ENCODE measurements at regions of chr15 and their contacts with region 1.

Region 1: GRCh38 chr15:70826634-70827033 is 27.3 kb downstream of the LARP6 start:
- DNase-seq: peak; percentile 66
- H3K4me3 ChIP-seq: no peak overlapping the region
- CTCF ChIP-seq: no peak

Region 2: DNA sequence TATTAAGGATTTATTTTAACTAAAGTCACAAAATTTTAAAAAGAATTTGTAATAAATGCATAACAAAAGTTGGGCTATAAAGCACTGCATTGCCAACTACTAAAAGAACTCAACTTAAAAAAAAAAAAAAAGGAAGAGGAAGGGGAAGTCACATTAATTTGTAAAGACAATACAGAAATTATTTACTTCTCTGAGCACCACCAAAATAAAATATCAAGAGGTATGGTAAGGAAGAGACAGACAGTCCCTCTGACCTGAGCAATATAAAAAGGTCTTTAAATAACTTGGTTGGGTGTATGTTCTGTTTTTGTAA is 146.8 kb before region 1 on chr15:
- CTCF ChIA-PET with region 1: interaction called, 23 read pairs
- POLR2A ChIA-PET with region 1: no interaction called
- DNase-seq: no peak
- H3K4me3 ChIP-seq: no peak overlapping the region
- CTCF ChIP-seq: no peak

Region 3: GRCh38 chr15:70799667-70800450 is 26.8 kb before region 1 on chr15:
- CTCF ChIA-PET with region 1: interaction called, 15 read pairs
- POLR2A ChIA-PET with region 1: no interaction called
- DNase-seq: peak; percentile 93
- H3K4me3 ChIP-seq: no peak overlapping the region
- CTCF ChIP-seq: no peak

Region 4: DNA sequence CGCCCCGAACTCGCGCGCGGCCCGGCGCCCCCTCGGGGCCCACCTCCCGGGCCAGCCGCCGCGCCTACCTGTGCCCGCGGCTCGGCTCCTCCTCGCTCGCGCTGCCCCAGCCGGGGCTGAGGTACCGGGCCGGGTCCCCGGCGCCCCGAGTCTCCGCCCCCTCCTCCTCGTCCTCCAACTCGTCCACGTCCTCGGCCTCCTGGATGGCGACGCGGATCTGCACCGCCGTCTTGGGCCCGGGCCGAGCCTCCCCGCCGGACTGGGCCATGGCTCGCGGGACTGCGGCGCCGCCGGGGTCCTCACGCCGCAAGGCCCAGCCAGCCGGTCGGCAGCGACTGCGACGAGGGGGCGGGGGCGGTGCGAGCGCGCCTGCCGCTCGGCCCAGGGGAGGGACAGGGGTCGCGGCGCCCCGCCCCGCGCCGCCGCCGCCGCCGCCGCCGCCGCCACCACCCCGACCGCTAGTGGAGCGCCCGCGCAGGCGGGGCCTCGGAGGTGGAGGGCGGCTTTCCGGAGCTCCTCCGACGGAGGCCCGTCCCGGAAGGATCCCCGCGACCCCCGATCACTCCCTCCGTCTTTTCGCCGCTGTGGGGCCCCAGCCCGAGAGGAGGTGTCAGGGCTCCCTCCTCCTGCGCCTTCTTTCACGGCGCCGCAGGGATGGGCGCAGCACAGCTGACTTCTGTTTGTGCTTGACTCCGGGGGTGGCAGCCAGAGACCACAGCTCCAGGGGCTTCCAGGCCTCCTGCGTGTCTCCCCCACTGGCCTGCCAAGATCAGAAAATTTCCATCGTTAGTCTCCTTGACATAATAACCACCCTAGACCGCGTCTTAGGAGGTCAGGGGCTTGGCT is 27.4 kb after region 1 on chr15 and contains the start of gene LARP6:
- CTCF ChIA-PET with region 1: interaction called, 16 read pairs
- POLR2A ChIA-PET with region 1: interaction called, 5 read pairs
- DNase-seq: no peak
- H3K4me3 ChIP-seq: peak within 1 kb of the TSS; percentile 89
- CTCF ChIP-seq: no peak

Region 5: DNA sequence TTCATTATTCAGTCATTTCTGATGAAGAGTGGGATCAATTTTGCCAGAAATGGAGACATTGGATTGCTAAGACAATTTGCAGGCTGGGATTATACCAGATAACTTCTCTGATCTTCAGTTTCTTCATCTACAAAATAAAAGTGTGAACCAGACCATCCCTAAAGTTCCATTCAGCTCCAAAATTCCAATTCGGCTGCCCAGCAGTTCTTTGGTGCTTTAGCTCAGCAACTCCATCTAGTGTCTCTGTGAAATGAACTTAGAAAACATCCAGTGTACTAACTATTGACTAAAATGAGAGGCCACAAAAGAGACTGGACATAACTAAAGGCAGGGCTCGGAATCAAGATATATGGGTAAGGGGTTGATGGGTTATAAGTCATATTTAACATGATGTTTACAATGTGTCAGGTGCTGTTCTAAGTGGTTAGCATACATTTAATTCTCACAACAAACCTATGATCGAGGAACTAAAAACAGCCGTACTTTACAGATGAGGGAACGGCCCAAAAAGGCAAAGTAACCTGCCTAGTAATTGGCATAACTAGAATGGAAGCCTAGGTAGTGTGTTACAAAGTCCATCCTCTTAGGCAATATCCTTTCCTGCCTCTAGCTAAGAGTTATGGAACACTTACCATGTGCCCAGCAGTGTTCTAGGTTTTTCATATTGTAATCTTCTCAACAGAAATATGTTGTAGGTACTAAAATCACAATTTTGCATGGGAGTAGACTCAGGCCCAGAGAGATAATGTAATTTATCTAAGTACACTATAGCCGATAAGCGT is 48.6 kb after region 1 on chr15:
- CTCF ChIA-PET with region 1: interaction called, 76 read pairs
- POLR2A ChIA-PET with region 1: no interaction called
- DNase-seq: no peak
- H3K4me3 ChIP-seq: no peak overlapping the region
- CTCF ChIP-seq: peak; percentile 54

Measured in AG04449 (cell line).